ENCODE measurements at regions of chr7 and their contacts with region 1.

Region 1: DNA sequence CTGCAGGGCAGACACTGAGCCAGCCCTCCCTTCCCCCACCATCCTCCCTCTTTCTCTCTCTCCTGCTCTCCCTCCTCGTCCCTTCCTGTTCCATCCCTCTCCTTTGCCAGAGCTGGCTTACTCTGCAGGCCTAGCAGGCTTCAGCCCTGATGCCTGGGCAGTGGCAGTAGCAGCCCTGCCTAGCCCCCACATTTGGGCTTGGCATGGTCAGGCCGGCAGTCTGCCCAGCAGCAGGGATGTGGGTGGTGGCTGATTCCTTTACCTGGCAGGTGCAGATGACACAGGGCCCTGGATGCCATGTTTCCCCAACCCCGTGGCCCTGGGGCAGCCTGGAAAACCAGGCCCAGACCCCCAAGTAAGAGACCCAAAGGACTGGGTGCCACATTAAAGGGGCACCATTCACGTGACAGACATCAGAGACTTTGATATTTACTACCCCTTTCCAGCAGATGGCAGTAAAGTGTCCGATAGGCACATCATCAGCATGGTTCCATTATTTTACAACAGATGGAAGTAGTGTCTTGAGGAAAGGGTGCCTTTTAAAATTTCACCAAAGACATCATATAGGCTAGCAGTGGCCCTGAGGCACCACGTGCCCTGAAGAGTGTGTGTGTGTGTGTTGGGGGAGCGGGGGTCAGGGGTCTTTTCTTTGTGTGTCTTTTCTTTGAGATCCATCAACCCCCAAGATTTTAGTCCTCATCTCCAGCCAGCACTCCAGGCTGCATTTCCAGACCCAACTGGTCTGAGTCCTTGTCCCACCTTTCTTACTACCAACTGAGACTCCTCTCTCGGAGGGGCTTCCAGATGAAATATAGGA is 5.9 kb downstream of the KCP start:
- DNase-seq: peak in 1 of 2 donors; percentile 39
- H3K4me3 ChIP-seq: no peak overlapping the region
- H3K27ac ChIP-seq: no peak overlapping the region
- H3K4me1 ChIP-seq: no peaks in the 10 kb centered on the region
- H3K27me3 ChIP-seq: no peaks in the 10 kb centered on the region
- CTCF ChIP-seq: peak; percentile 13 to 56 (median 20)

Region 2: GRCh38 chr7:128914566-128915151 is 10.1 kb after region 1 on chr7:
- intact Hi-C with region 1: no loop called
- DNase-seq: peak in 1 of 2 donors; percentile 55
- H3K4me3 ChIP-seq: no peak overlapping the region
- H3K27ac ChIP-seq: no peak overlapping the region
- H3K4me1 ChIP-seq: peaks cover 2 to 6% of the 10 kb centered on the region in 2 donors
- H3K27me3 ChIP-seq: no peaks in the 10 kb centered on the region
- CTCF ChIP-seq: no peak

Region 3: DNA sequence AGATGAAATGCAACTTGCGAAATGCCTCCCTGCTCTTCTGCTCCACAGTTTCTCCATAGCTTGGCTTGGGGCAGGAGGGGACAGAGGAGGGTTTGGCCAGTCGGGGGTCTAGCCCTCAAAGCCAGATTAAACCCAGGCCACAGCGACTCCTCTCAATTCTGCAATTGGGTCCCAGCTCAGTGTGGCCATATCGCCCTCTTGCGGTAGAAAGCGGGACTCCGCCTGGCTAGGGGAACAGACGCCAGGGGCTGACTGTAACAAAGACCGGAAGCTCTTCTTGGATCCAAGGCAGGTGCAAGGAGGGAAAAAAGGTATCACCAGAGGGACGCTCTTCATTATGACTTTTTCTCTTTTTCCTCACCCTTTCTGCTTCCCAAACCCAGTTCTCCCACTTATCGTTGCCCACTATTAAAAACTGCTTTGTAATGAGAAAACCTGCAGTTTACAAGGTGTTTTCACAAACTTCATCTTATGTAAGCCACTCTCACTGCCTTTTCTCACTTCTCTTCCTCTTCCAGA is 187.0 kb after region 1 on chr7:
- intact Hi-C with region 1: loop called (anchors 5 kb)
- DNase-seq: peak; percentile 45 to 84
- H3K4me3 ChIP-seq: no peak overlapping the region
- H3K27ac ChIP-seq: no peak overlapping the region
- H3K4me1 ChIP-seq: no peaks in the 10 kb centered on the region
- H3K27me3 ChIP-seq: no peaks in the 10 kb centered on the region
- CTCF ChIP-seq: peak; percentile 81 to 95 (median 92)

Measured in ascending aorta (tissue), 2 donors.